WTC11 (cell line): ENCODE measurements at regions of chr4 and their contacts with region 1.

Region 1: DNA sequence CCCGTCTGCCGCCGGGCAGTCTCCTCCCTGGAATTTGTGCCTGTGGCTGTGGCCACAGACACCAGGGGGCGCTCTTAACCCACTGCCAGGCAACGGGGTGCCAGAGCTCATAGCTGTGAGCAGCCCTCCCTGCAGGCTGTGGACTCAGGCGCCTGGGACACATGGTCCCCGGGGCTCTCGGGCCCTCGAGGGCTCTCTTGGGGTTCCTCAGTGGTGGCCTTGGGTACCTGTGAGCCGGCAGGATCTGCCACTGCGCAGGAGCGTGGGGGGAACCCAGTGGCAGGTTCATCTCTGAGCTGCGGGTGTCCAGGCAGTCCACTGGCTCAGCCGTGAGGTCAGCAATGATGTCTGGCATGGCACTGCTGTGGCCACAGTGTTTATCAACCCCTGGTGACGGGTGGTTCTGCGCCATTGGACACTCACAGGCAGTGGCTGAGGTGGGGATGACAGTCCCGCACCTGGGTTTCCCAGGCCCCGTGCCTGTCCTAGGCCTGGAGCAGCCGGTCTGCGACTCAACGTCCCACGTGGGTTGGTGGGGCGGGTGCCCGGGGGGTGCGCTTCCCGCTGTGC is 37.2 kb downstream of the PCGF3 start:
- DNase-seq: peak; percentile 85
- ATAC-seq: peak; percentile 93
- H3K4me3 Mint-ChIP-seq: no peak overlapping the region
- H3K27ac Mint-ChIP-seq: no peak overlapping the region
- H3K4me1 Mint-ChIP-seq: no peaks in the 10 kb centered on the region
- H3K27me3 Mint-ChIP-seq: no peaks in the 10 kb centered on the region
- CTCF ChIP-seq: peak; percentile 94

Region 2: DNA sequence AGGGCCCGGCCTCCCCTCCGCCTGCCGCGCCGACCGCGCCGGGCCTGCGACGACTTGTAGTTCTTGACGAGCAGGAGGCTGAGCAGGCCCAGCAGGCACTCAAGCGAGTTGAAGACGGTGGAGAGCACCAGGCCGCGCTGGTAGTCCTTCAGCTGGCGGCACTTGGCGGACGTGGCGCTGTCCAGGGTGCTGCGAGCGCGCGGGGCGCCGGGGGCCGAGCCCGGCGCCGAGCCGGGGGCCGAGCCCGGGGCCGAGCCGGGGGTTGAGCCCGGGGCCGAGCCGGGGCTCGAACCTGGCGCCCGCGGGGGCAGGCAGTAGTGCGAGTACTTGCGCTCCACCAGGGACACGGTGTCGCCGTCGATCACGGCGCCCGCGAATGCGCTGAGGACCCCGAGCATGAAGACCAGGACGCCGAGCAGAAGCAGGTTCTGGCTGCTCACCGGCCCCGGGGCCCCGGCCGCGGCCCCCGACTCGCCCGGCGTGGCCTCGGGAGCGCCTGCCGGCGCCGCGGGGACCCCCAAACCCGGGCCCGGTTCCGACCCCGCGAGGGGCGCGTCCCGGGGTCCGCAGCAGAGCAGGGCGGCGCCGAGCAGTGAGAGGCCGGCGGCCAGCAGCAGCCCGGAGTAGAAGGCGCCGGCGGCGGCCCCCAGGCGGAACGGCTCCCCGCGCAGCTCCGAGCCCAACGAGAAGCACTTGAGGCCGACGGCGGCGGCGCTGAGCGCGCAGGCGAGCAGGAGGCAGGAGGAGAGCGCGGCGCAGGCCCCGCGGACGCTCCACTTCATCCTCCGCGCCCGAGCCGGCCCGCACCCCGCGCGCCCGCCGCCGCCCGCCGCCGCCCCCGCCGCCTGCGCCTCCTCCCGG is 167.3 kb before region 1 on chr4:
- CTCF ChIA-PET with region 1: no interaction called
- POLR2A ChIA-PET with region 1: no interaction called
- DNase-seq: peak; percentile 78
- ATAC-seq: peak; percentile 50
- H3K4me3 Mint-ChIP-seq: no peak overlapping the region
- H3K27ac Mint-ChIP-seq: no peak overlapping the region
- H3K4me1 Mint-ChIP-seq: peaks cover 25% of the 10 kb centered on the region
- H3K27me3 Mint-ChIP-seq: peaks cover 84% of the 10 kb centered on the region
- CTCF ChIP-seq: no peak

Region 3: DNA sequence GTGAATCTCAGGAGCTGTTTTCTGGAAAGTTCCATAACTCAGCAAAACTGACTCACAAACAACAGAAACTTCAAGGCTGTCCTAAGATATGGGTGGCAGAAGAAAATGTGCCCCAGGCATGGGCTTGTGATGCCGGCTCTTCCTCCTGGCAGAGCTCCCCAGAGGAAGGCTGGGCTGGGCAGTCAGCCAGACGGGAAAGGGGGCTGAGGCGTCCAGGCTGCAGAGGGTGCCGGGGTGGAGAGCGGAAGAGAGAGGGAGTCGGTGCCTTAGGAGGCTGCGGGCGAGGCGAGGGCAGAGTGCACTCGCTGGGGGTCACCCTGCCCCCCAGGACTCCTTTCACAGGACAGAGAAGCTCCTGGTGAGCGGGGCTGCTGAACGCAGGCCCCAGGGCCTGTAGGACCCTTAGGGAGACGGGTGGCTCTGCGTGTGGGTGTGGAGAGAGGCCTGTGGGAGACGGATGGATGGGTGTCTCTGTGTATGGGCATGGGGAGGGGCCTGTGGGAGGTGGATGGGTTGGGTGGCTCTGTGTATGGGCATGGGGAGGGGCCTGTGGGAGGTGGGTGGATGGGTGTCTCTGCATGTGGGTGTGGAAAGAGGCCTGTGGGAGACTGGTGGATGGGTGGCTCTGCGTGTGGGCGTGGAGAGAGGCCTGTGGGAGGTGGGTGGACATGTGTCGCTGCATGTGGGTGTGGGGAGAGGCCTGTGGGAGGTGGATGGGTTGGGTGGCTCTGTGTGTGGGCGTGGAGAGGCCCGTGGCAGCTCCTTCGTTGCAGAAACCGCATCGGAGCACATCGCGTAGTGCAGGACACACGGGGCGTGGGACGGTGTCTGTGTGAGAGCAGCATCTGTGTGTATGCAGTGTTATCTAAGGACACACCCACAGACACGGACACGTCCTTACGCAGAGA is 21.3 kb before region 1 on chr4:
- CTCF ChIA-PET with region 1: interaction called, 13 read pairs
- POLR2A ChIA-PET with region 1: no interaction called
- DNase-seq: no peak
- ATAC-seq: no peak
- H3K4me3 Mint-ChIP-seq: no peak overlapping the region
- H3K27ac Mint-ChIP-seq: peak overlapping the region; percentile 60
- H3K4me1 Mint-ChIP-seq: no peaks in the 10 kb centered on the region
- H3K27me3 Mint-ChIP-seq: no peaks in the 10 kb centered on the region
- CTCF ChIP-seq: no peak

Region 4: DNA sequence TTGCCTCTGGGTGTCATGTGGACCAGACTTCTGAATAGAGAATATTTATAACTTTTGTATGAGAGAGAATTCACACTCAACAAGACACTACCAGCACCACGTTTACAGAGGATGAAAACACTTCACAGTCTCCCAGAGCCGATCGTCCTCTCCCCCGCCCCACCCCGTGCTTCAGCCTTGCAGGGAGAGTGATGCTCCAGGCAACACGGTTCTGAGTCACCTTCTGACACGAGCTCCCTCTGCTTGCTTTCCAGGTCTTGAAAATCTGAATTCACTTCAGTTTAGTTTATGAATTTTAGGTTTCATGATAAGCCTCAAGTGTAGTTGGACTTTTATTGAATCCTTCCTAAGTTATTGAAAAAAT is 23.3 kb after region 1 on chr4:
- CTCF ChIA-PET with region 1: interaction called, 24 read pairs
- POLR2A ChIA-PET with region 1: no interaction called
- DNase-seq: no peak
- ATAC-seq: peak; percentile 10; the same call in 1 of the 2 replicates
- H3K4me3 Mint-ChIP-seq: no peak overlapping the region
- H3K27ac Mint-ChIP-seq: peak overlapping the region; percentile 86; the same call in 1 of the 2 replicates
- H3K4me1 Mint-ChIP-seq: peaks cover 30% of the 10 kb centered on the region
- H3K27me3 Mint-ChIP-seq: no peaks in the 10 kb centered on the region
- CTCF ChIP-seq: no peak

Region 5: GRCh38 chr4:781493-782216 is 38.8 kb after region 1 on chr4:
- CTCF ChIA-PET with region 1: interaction called, 12 read pairs
- POLR2A ChIA-PET with region 1: no interaction called
- DNase-seq: peak; percentile 99
- ATAC-seq: peak; percentile 92
- H3K4me3 Mint-ChIP-seq: peak overlapping the region; percentile 77
- H3K27ac Mint-ChIP-seq: no peak overlapping the region
- H3K4me1 Mint-ChIP-seq: peaks cover 36% of the 10 kb centered on the region
- H3K27me3 Mint-ChIP-seq: peaks cover 39% of the 10 kb centered on the region
- CTCF ChIP-seq: no peak

Region 6: DNA sequence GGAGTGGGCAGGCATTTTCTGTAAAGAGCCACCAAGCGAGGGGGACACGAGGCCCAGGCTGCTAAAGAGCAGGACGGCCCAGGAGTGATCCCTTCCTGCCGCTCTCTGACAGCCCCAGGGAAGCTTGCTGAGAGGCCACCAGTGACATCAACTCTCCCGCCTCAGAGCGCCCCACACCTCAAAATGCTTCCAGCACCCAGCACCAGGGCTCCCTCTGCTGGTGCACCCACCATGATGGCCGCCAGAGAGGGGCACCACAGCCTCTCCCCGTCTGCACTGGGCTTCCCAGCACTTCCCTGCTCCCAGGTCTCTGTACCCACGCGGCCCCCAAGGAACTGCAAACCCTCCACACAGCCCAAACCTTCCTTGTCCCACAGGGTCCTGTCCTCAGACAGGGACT is 148.9 kb after region 1 on chr4:
- CTCF ChIA-PET with region 1: interaction called, 11 read pairs
- POLR2A ChIA-PET with region 1: no interaction called
- DNase-seq: peak; percentile 74
- ATAC-seq: peak; percentile 80
- H3K4me3 Mint-ChIP-seq: no peak overlapping the region
- H3K27ac Mint-ChIP-seq: no peak overlapping the region
- H3K4me1 Mint-ChIP-seq: no peaks in the 10 kb centered on the region
- H3K27me3 Mint-ChIP-seq: no peaks in the 10 kb centered on the region
- CTCF ChIP-seq: no peak; the same call in 1 of the 2 replicates